ENCODE measurements at regions of chr5 and their contacts with region 1.

Region 1: DNA sequence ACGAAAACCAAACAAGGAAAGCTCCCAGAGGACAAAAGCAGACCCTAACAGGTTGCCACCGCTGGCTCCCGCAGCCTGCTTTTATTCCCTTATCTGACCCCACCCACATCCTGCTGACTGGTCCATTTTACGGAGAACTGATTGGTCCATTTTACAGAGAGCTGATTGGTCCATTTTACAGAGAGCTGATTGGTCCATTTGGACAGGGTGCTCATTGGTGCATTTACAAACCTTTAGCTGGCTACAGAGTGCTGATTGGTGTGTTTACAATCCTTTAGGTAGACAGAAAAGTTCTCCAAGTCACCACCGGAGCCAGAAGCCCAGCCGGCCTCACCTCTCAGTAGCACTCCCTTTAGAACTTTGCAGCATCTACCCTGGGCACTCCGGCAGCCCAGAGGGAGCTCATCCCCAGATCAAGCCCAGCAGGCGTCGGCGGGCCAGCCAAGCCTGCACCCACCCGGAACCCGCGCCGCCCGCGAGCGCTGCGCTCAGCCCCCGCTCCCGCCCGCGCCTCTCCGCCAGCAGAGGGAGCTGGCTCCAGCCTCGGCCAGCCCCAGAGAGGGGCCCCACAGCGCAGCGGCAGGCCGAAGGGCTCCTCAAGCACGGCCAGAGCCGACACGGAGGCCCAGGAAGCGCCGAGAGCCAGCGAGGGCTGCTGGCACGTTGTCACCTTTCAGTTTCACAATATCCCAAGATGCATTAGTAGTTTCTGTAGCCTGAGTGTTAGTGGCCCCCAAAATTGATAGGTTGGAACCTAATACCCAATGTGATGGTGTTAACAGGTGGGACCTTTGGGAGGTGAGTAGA is 35.3 kb upstream of the CLPTM1L start:
- DNase-seq: peak; percentile 76
- ATAC-seq: peak; percentile 95
- H3K4me3 Mint-ChIP-seq: peak overlapping the region; percentile 27; the same call in 1 of the 2 replicates
- H3K27ac Mint-ChIP-seq: no peak overlapping the region
- H3K4me1 Mint-ChIP-seq: peaks cover 1% of the 10 kb centered on the region; the same call in 1 of the 2 replicates
- H3K27me3 Mint-ChIP-seq: peaks cover 52% of the 10 kb centered on the region
- CTCF ChIP-seq: peak; percentile 61; the same call in 1 of the 2 replicates

Region 2: GRCh38 chr5:472656-473553 is 907.3 kb before region 1 on chr5:
- CTCF ChIA-PET with region 1: no interaction called
- POLR2A ChIA-PET with region 1: no interaction called
- DNase-seq: peak; percentile 72
- ATAC-seq: peak; percentile 59
- H3K4me3 Mint-ChIP-seq: peak overlapping the region; percentile 64
- H3K27ac Mint-ChIP-seq: no peak overlapping the region
- H3K4me1 Mint-ChIP-seq: peaks cover 9% of the 10 kb centered on the region
- H3K27me3 Mint-ChIP-seq: peaks cover 49% of the 10 kb centered on the region
- CTCF ChIP-seq: no peak

Region 3: GRCh38 chr5:1366514-1366913 is 13.7 kb before region 1 on chr5:
- CTCF ChIA-PET with region 1: interaction called, 22 read pairs
- POLR2A ChIA-PET with region 1: no interaction called
- DNase-seq: no peak
- ATAC-seq: no peak
- H3K4me3 Mint-ChIP-seq: no peak overlapping the region
- H3K27ac Mint-ChIP-seq: no peak overlapping the region
- H3K4me1 Mint-ChIP-seq: peaks cover 12% of the 10 kb centered on the region; the same call in 1 of the 2 replicates
- H3K27me3 Mint-ChIP-seq: peaks cover 2% of the 10 kb centered on the region; the same call in 1 of the 2 replicates
- CTCF ChIP-seq: no peak

Region 4: DNA sequence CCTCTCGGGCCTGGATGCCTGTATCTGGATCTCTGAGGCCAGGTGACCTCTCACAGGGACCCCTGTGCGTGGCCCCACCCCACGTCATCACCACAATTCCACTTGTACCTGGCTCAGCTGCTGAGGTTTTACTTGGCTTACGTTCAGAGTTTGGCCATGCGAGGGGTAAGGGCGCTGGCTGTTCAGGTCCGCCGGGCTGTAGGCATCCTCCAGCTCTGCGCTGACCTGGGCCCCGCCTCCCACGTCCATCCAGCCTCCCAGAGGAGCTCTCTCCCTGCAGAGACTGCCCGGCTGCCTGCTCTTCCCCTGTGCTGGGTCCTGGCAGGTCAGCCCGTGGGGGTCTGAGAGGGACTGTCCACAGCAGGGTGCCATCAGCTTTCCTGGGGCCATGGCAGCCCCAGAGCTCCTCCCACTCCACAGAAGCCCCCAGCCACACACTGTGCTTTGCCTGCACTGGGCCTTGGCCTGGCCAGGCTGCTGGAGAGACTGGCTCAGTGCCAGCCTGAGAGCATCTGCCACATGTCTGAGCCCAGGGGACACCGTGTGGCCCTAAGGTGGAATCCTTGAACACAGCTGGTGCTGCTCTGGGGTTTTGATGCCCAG is 21.4 kb after region 1 on chr5:
- CTCF ChIA-PET with region 1: interaction called, 27 read pairs
- POLR2A ChIA-PET with region 1: no interaction called
- DNase-seq: no peak
- ATAC-seq: no peak
- H3K4me3 Mint-ChIP-seq: no peak overlapping the region
- H3K27ac Mint-ChIP-seq: no peak overlapping the region
- H3K4me1 Mint-ChIP-seq: no peaks in the 10 kb centered on the region
- H3K27me3 Mint-ChIP-seq: no peaks in the 10 kb centered on the region; the same call in 1 of the 2 replicates
- CTCF ChIP-seq: no peak

Region 5: DNA sequence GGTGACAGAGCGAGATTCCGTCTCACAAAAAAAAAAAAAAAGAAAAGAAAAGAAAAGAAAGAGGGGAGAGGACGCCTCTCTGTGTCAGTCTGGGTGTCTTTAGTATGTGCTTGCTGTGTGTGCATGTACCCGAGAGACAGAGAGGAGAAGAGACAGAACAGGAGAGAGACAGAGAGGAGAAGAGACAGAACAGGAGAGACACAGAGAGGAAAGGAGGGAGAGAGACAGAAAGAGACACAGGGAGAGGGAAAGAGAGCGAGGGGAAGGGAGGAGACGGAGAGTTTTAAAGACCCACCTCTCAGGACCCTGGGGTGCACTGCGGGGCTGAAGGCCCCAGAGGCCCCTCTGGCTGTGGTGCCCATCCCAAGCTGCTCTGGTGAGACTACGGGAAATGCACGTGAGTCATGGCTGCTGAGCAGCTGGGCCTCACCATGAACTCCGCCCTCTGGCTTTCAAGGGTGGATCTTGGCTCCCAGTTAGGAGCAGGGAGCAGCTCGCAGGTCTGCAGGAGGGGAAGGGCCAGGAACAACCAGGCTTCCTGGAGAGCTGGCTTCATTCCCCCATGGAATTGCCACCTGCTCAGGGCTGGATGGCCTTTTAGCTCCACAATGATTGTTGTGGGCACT is 57.1 kb after region 1 on chr5:
- CTCF ChIA-PET with region 1: interaction called, 21 read pairs
- POLR2A ChIA-PET with region 1: no interaction called
- DNase-seq: peak; percentile 43
- ATAC-seq: peak; percentile 92
- H3K4me3 Mint-ChIP-seq: no peak overlapping the region
- H3K27ac Mint-ChIP-seq: no peak overlapping the region
- H3K4me1 Mint-ChIP-seq: peaks cover 8% of the 10 kb centered on the region; the same call in 1 of the 2 replicates
- H3K27me3 Mint-ChIP-seq: peaks cover 21% of the 10 kb centered on the region
- CTCF ChIP-seq: no peak

Region 6: DNA sequence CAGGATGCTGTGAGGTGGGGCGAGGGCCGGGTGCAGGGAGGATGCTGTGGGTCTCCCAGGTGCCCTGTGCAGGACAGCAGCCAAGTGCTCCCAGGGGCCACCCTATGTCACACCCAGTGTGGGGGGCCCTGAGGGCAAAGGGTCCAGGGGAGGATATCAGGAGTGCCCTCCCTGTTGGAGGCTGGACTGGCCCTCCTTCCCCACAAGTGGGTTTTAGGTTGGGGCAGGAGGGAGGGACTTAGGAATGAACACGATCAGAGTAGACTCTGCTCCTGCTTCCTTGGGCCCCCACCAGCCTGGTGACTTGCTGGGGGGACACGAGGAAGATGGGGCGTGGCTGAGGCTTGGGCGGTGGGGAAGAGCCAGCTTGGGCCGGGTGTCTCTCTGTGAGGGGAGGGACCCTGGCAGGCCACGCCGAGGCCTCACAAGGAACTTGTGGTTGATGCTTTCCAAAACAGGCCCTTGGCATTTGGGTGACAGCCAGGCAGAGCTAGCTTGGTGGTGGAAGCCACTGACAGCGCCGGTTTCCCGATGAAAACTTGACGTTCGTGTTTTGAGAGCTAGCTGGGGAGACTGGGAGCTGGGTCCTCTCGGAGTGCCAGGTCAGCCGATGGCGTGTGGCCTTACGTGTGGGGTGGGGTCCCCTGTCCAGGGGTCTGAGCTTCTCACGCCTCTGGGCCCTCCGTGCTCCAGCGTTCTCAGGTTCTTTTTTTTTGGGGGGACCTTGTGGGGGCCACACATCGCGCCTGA is 272.6 kb after region 1 on chr5:
- CTCF ChIA-PET with region 1: interaction called, 10 read pairs
- POLR2A ChIA-PET with region 1: no interaction called
- DNase-seq: no peak
- ATAC-seq: no peak
- H3K4me3 Mint-ChIP-seq: peak overlapping the region; percentile 61
- H3K27ac Mint-ChIP-seq: no peak overlapping the region
- H3K4me1 Mint-ChIP-seq: peaks cover 3% of the 10 kb centered on the region
- H3K27me3 Mint-ChIP-seq: peaks cover 47% of the 10 kb centered on the region
- CTCF ChIP-seq: no peak